GM18951 (cell line): ENCODE measurements at regions of chr6 and their contacts with region 1.

Region 1: DNA sequence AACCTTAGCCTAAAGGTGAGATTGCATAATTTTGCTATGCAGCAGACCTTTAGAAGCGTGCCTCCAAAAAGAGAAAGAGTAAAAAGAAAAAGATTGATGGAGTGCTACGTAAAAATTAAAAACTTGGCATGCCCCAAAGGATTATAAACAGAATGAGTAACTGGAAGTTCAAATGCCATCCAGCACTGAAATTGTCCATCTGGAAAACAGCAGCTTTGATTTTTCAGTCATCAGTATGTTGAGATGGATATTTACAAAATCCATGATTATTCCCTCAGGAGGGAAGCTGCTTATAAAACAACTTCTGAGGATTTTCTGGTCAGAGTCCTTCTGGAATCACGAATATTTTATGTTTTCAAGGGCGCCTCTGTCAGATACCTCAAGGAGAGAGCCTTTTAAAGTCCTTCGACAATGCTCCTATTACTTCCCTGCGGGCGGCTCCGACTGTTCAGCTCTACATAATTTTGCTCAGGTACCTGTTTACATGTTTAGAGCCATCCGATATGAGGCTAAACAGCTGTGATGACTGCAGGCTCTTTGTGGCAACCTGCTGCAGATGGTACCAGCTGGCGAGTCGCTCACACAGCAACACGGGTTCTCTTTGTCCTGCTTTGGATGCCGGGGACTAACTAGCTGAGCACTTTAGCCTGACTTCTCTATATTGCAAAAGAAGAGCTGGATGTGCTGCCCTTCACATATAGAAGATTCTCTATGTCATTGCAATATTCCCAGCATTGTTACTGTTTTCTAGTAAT is 83.3 kb downstream of the RCAN2 start:
- POLR2A ChIP-seq: no peak

Region 2: GRCh38 chr6:46080111-46080510 is 327.8 kb before region 1 on chr6:
- in situ Hi-C with region 1: loop called (anchors 10 kb)
- POLR2A ChIP-seq: no peak